Gastrocnemius medialis (tissue), 4 donors: ENCODE measurements at regions of chr6 and their contacts with region 1.

Region 1: DNA sequence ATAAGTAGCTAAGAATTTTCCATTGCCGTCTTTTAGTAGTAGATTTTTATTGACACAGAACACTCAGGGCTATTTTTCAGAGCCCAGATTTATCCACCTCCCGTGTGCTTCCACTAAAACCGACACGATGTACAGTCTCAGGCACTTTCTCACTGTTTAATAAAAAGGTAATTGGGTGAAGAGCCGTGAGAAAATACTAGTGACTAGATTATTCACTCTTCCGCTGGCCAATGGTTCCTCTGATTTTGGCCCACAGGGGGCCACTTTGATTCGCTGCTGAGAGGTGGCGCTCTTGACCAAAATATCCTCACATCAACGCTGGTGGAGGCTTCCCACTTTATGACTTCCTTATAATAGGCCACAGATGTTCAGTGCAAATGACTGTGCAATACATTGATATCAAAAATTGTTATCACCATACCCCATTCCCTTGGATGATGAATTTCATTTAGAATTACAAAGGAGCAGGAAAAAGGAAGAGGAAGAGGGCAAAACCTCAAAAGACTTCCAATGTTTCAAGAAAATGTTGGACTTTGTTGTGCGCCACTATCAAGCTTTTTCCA is 12.3 kb upstream of the HDDC2 start:
- DNase-seq: peak; percentile 36 to 54
- ATAC-seq: peak; percentile 79 to 80
- H3K4me3 ChIP-seq: no peak overlapping the region
- H3K27ac ChIP-seq: peak overlapping the region in 2 of 4 donors; percentile 45 to 48
- H3K4me1 ChIP-seq: no peaks in the 10 kb centered on the region
- H3K27me3 ChIP-seq: no peaks in the 10 kb centered on the region
- CTCF ChIP-seq: peak; percentile 62 to 82 (median 73)
- POLR2A ChIP-seq: no peak

Region 2: DNA sequence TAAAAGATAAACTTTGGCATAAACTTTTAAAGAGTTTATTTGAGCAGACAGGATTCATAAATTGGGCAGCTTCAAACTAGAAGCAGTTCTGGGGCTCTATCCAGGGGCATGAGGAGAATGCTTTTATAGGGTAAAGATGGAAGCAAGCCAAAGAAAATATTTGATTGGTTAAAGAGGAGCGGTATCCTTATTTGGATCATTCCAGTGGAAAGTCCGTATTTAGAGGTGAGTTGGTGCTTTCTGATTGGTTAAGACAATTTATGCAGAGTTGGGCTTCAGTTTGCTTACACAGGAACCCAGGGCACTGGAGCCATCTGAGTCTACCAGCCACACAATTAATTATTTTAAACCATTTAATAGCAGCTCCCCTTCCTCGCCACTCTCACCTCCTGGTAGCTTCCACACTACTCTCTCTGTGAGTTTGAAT is 389.8 kb before region 1 on chr6:
- in situ Hi-C with region 1: no loop called
- intact Hi-C with region 1: no loop called
- DNase-seq: no peak
- ATAC-seq: no peak
- H3K4me3 ChIP-seq: no peak overlapping the region
- H3K27ac ChIP-seq: no peak overlapping the region
- H3K4me1 ChIP-seq: no peaks in the 10 kb centered on the region
- H3K27me3 ChIP-seq: no peaks in the 10 kb centered on the region
- CTCF ChIP-seq: no peak
- POLR2A ChIP-seq: no peak

Region 3: DNA sequence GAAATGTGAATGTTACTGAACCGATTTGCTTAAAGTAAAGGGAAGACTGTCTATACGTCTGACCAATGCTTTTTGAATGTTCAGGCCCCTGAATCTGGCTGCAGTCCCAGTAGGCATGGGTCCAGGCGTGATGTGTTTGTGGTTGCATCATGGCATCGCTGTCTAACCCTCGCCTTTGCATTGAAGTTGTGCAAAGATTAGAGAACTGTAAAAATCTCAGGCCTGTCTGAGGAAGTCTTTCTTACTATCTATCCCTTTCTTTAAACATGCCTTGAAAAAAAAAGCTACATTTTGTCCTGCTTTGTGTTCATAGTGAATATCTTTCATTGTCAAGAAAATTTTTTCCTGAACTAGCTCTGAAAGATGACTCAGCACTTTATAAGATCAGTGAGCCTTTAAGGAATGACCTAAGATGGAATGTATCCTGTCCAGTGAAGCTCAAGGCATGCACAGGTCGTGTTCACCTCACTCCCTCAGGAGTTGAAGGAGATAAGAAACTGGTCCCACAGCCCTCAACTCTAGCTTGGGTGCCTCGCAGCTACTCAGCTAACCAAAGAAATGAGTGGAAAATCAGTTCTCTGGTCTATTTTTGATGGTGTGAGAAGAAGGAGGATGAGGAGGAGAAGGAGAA is 112.0 kb before region 1 on chr6:
- in situ Hi-C with region 1: no loop called
- intact Hi-C with region 1: no loop called
- DNase-seq: peak in 1 of 2 donors; percentile 40
- ATAC-seq: no peak
- H3K4me3 ChIP-seq: no peak overlapping the region
- H3K27ac ChIP-seq: peak overlapping the region; percentile 53 to 94 (median 78)
- H3K4me1 ChIP-seq: peaks cover 89% of the 10 kb centered on the region in 2 donors
- H3K27me3 ChIP-seq: no peaks in the 10 kb centered on the region
- CTCF ChIP-seq: no peak
- POLR2A ChIP-seq: no peak

Region 4: DNA sequence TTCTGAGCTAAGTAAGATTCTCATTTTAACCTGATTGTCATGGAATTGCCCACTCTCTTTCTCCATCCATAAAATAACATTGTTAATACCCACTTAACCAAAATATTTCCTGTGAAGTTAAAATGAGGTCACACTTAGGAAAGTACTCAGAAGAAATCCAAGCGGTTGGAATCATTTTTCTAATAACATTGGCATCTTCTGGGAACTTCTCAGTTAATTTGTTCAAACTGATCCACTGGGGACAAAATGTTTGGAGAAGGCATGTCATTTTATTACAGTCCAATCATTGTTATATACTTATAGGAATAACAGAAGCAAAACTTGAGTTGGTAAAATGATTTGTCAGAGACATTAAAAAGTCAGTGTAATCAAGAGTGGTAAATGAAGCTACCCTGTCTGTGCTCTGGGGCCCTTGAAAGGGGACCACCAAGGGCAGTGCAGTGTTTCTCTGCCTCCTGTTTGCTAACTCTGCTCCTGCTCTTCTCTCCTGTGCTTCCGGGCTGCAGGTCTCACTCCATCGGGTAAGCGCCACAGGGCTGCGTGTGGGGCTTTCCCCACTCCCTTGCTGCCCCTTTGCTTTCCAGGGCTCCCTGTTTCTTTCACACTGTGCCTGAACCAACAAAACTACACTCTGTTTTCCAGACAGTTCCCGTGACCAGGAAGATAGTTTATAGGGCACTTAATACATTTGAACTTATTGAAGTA is 62.4 kb before region 1 on chr6:
- in situ Hi-C with region 1: no loop called
- intact Hi-C with region 1: no loop called
- DNase-seq: no peak
- ATAC-seq: no peak
- H3K4me3 ChIP-seq: no peak overlapping the region
- H3K27ac ChIP-seq: no peak overlapping the region
- H3K4me1 ChIP-seq: peaks cover 0 to 19% of the 10 kb centered on the region in 2 donors
- H3K27me3 ChIP-seq: no peaks in the 10 kb centered on the region
- CTCF ChIP-seq: no peak
- POLR2A ChIP-seq: no peak

Region 5: DNA sequence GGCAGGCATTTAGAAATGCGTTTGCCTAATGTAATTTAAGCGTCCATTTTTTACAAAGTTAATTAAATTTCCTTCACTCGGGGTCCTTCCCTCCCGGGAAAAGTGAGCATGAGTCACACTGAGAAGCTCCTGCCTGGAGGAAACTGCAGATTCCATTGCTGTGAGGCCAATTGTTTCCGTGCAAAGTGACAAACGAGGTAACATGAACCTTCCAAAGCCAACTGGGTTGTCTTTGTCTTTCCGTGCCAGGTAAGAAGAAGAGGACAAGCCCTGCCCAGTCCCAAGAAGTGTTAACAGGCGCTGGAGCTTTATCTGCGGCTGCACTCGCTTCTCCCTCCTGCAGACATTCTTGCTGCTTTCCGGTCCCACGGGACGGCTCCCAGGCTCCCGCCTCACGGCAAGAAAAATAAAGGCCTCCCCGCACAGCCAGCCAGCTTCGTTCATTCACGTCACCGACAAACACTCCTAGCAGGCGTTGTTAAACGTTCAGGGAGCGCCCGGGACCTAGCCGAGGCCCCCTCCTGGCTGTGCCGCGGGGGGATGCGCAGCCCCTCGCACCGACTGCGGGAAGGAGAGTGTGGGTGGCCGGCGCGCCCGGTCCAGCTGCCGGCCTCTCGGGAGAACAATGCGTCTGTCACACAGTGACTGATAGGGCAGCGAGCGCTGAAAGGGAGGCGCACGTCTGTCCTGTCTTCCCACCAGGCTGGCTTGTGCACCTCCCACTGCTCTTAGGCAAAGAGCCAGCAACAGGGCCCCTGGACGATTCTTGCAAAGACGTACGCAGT is 49.1 kb after region 1 on chr6:
- in situ Hi-C with region 1: no loop called
- intact Hi-C with region 1: no loop called
- DNase-seq: peak; percentile 14 to 39
- ATAC-seq: peak; percentile 76 to 81
- H3K4me3 ChIP-seq: peak overlapping the region; percentile 56 to 78 (median 62)
- H3K27ac ChIP-seq: peak overlapping the region; percentile 54 to 74 (median 60)
- H3K4me1 ChIP-seq: peaks cover 6 to 9% of the 10 kb centered on the region in 2 donors
- H3K27me3 ChIP-seq: no peaks in the 10 kb centered on the region
- CTCF ChIP-seq: no peak
- POLR2A ChIP-seq: no peak

Region 6: DNA sequence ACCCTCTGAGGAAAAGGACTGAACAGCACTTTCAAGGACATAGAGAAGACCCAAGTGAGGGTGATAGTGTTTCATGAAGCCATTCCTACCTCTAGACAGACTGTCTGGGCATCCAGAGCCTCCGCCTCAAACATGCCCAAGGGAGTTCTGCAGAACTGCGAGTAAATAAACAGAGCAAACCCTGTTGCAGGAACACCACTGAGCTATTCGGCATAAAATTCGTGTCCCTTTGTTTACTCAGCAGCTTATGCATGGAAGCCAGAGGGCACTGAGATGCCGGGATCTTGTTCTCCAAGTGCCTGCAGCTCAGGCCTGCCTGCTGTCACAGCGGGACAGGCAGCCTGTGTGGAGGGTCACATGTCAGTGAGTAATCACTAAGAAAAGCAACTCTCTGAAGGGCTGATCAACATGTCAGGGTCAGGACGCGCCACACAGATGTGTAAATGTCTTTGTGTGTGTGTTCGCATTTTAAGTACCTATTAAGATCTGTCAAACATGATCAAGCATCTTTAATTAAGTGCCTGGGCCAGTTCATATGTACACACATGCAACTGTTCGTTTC is 270.4 kb after region 1 on chr6:
- in situ Hi-C with region 1: no loop called
- intact Hi-C with region 1: loop called (anchors 2 kb)
- DNase-seq: peak; percentile 83 to 88
- ATAC-seq: peak; percentile 97 to 98
- H3K4me3 ChIP-seq: peak overlapping the region in 2 of 4 donors; percentile 12 to 25
- H3K27ac ChIP-seq: peak overlapping the region; percentile 84 to 88 (median 87)
- H3K4me1 ChIP-seq: peaks cover 14 to 17% of the 10 kb centered on the region in 2 donors
- H3K27me3 ChIP-seq: no peaks in the 10 kb centered on the region
- CTCF ChIP-seq: peak; percentile 34 to 62 (median 44)
- POLR2A ChIP-seq: peak in 1 of 2 donors; percentile 34

Region 7: DNA sequence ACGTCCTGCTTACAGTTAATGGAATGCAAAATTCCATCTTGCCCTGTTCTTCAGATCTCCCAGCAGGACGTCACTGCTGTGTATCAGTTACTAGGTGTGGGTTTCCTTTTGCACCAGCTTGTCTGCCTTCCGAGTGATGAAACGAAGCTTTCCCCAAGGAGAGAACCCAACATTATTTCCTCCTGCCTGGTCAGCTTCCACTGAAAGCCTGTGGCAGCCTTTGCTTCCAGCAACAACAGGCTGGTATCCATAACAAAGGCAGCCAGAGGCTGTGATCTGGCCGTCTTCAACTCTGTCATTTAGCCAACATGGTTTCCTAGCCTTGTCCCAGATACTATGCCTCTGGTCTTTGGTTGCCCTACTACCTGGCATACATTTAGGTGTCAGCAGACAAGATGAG is 356.5 kb after region 1 on chr6:
- in situ Hi-C with region 1: no loop called
- intact Hi-C with region 1: loop called (anchors 5 kb)
- DNase-seq: peak; percentile 13 to 78
- ATAC-seq: peak; percentile 83 to 96
- H3K4me3 ChIP-seq: peak overlapping the region in 1 of 4 donors; percentile 23
- H3K27ac ChIP-seq: peak overlapping the region; percentile 59 to 80 (median 70)
- H3K4me1 ChIP-seq: peaks cover 10 to 18% of the 10 kb centered on the region in 2 donors
- H3K27me3 ChIP-seq: no peaks in the 10 kb centered on the region
- CTCF ChIP-seq: no peak
- POLR2A ChIP-seq: no peak

Region 8: DNA sequence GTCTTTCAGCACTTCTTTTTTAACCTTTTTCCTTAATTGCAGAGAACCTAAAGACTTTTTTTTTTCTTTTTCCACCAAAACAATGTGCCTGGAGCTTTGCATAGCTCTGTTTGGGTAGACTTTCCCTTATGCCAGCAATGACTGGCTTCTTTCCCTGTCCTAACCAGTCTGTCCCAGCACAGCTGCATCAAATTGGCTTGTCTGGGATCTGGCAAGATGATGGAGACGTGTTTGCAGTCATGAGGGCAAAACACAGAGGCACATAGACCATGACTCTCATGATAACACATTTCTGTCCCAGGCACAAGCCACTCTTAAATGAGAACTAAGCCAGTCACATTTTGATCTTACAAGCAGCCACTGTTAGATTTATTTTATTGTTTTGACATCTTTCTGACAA is 451.8 kb after region 1 on chr6:
- in situ Hi-C with region 1: loop called in 3 of 4 experiments (anchors 5 kb)
- intact Hi-C with region 1: loop called (anchors 2 kb)
- DNase-seq: no peak
- ATAC-seq: no peak
- H3K4me3 ChIP-seq: no peak overlapping the region
- H3K27ac ChIP-seq: no peak overlapping the region
- H3K4me1 ChIP-seq: peaks cover 0 to 5% of the 10 kb centered on the region in 2 donors
- H3K27me3 ChIP-seq: no peaks in the 10 kb centered on the region
- CTCF ChIP-seq: no peak
- POLR2A ChIP-seq: no peak

Region 9: DNA sequence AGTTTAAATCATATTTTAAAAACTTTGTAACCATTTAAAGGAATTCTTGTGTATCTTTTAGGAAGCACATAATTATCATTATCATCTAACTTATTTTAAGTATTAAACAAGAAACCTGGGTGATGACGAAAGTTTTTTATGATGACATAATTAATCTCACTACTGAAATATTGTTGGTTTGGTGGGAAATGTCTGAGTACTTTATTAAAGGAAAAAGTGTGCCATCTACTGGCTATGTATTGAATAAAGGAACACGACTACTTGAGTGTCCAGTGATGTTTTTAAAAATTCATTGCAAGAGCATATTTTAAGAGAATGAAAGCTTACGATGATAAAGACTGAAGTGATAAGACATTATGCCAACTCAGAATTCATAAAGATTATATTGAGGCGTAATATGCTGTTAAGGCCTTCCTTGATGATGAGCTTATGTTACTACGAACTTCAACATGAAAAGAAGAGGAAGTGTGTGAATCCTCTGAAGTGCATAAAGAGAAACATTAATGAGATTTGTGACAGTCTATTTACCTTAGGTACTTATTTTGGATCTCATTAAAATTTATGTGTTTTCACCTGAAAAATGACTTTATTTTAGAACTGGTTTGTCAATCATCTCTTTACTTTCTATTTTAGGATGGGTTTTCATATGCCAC is 660.2 kb after region 1 on chr6:
- in situ Hi-C with region 1: loop called (anchors 10 to 25 kb)
- intact Hi-C with region 1: loop called (anchors 5 kb)
- DNase-seq: no peak
- ATAC-seq: peak in 1 of 2 donors; percentile 49
- H3K4me3 ChIP-seq: no peak overlapping the region
- H3K27ac ChIP-seq: no peak overlapping the region
- H3K4me1 ChIP-seq: no peaks in the 10 kb centered on the region
- H3K27me3 ChIP-seq: no peaks in the 10 kb centered on the region
- CTCF ChIP-seq: peak in 2 of 5 experiments; percentile 45 to 51
- POLR2A ChIP-seq: no peak